ENCODE measurements at regions of chr20 and their contacts with region 1.

Region 1: DNA sequence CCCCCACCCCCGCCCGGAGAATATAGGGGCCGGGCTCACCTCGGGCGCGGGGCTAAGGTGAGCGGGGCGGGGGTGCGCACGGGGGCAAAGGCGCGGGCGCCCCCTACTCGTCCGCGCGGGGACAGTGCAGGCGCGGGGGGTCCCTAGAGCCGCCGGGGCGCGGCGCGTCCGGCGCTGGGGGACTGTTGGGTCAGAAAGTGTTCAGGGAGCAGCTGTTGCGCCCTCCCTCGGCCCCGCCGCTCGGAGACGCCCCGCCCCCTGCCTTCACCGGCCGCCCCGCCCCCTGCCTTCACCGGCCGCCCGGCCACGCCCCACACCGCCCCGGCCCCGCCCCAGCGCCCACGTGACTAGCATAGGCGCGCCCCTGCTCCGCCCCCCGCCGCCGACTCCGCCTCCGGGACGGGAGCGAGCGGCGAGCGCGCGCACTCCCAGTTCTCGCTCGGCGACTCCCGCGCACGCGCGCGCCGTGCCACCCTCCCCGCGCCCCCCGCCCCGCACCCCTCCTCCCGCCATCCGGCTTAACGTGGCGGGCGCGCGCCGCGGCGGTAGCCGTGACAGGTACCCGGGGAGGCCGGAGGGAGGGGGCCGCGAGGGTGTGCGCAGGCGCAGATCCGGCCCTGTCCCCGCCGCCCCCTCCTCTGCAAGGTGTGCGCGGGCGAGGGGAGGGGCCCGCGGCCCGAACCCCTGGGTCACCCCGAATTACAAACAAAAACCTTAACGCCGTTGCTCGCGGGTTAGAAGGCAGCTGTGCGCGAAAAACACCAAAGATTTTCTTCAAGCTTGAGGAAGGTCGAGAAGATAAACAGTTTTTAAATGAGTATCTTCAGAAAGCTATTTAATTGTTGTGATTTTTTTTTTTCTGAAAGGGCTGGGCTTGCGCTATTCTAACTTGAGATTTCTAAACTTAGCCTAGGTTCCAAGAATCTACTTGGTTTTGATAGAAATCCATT is 704 bp upstream of the ZNF217 start:
- DNase-seq: peak; percentile 90
- H3K4me3 Mint-ChIP-seq: peak overlapping the region; percentile 82
- H3K27ac Mint-ChIP-seq: peak overlapping the region; percentile 93
- H3K4me1 Mint-ChIP-seq: peaks cover 29% of the 10 kb centered on the region
- H3K27me3 Mint-ChIP-seq: no peaks in the 10 kb centered on the region
- CTCF ChIP-seq: peak; percentile 23

Region 2: GRCh38 chr20:53611449-53611894 is 17.1 kb after region 1 on chr20:
- CTCF ChIA-PET with region 1: interaction called, 7 read pairs
- POLR2A ChIA-PET with region 1: interaction called, 73 read pairs
- intact Hi-C with region 1: no loop called
- DNase-seq: peak; percentile 82
- H3K4me3 Mint-ChIP-seq: peak overlapping the region; percentile 47
- H3K27ac Mint-ChIP-seq: peak overlapping the region; percentile 82
- H3K4me1 Mint-ChIP-seq: peaks cover 12% of the 10 kb centered on the region
- H3K27me3 Mint-ChIP-seq: no peaks in the 10 kb centered on the region
- CTCF ChIP-seq: no peak

Region 3: DNA sequence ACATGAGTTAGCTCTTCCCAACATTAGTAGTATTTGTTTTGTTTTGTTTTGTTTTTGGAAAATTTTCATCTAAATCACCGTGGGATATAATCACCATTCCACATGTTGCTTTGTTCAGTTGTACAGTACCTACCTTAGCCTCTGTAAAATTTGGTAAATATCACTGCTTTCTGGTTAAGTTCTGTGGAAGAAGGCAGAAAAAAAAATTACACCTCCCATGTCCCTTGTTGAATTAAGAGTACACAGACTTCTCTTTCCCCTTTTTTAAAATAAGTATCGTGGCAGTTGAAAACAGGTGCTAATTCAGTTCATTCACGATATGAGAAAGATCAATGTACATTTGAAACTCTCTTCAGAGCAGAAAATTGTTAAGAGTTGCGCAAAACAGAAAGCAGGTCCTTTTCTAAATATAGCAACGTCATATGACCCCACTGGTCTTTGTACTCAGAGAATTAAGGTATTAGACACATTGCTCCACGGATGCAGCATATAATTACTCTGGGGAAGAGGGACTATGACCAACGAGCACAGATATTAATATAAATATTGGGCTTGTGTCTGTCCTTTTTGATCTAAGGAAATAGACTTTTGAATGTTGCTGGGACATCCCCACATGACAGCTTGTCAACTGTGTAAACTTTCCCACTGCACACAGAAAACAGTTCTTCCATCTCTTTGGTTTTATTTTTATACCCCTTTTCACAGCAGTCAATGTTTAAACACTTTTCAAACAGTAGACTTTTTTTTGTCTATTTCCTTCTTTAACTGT is 57.9 kb after region 1 on chr20:
- CTCF ChIA-PET with region 1: no interaction called
- POLR2A ChIA-PET with region 1: interaction called, 15 read pairs
- intact Hi-C with region 1: no loop called
- DNase-seq: no peak
- H3K4me3 Mint-ChIP-seq: no peak overlapping the region
- H3K27ac Mint-ChIP-seq: no peak overlapping the region
- H3K4me1 Mint-ChIP-seq: peaks cover 15% of the 10 kb centered on the region
- H3K27me3 Mint-ChIP-seq: no peaks in the 10 kb centered on the region
- CTCF ChIP-seq: no peak

Region 4: DNA sequence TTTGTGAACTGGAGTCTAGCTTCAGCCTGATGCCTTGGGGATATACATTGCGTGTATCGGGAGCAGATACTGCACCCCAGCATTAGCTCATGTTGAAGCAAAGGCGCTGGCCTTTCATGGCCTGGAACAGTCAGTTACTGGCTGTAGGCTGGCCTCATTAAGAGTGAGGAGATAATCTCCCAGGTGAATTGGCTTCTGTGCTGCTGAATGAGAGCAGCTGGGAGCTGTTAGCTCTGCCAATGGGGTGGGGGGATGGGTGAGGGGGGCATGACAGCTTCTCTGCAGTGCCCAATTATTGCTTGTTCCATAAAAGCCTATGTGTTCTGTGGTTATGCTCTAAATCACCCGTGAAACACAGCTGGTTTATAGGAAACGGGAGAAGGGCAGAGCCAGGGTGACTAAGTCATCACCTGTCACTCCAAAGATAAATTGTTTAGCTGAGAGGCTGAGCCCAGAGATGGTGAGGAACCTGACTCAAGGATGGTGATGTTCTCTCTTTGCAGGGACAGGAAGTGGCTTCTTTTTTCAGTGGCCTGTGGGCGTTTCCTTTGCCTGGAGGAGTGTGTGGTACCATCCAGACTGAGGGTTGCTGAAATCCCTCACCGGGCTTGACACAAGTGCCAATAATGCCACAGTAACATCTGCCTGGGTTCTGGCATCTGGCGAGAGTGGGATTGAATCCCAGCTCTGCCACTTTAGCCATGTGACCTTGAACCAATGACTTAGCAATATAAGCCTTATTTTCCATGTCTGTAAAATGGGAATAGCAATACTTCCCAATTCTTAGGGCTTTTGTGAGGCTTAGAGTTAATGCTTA is 305.2 kb after region 1 on chr20:
- CTCF ChIA-PET with region 1: no interaction called
- POLR2A ChIA-PET with region 1: interaction called, 30 read pairs
- intact Hi-C with region 1: no loop called
- DNase-seq: peak; percentile 89
- H3K4me3 Mint-ChIP-seq: peak overlapping the region; percentile 39
- H3K27ac Mint-ChIP-seq: peak overlapping the region; percentile 75
- H3K4me1 Mint-ChIP-seq: peaks cover 27% of the 10 kb centered on the region
- H3K27me3 Mint-ChIP-seq: no peaks in the 10 kb centered on the region
- CTCF ChIP-seq: no peak

Region 5: GRCh38 chr20:53939572-53940359 is 345.4 kb after region 1 on chr20:
- CTCF ChIA-PET with region 1: interaction called, 4 read pairs
- POLR2A ChIA-PET with region 1: interaction called, 12 read pairs
- intact Hi-C with region 1: no loop called
- DNase-seq: peak; percentile 95
- H3K4me3 Mint-ChIP-seq: no peak overlapping the region
- H3K27ac Mint-ChIP-seq: peak overlapping the region; percentile 18
- H3K4me1 Mint-ChIP-seq: peaks cover 19% of the 10 kb centered on the region
- H3K27me3 Mint-ChIP-seq: no peaks in the 10 kb centered on the region
- CTCF ChIP-seq: peak; percentile 73

Measured in MCF 10A (cell line).